Vagina (tissue), 2 donors: ENCODE measurements at regions of chr12 and their contacts with region 1.

Region 1: GRCh38 chr12:12376646-12377448 is 20.0 kb downstream of the BORCS5 start:
- DNase-seq: no peak
- H3K4me3 ChIP-seq: no peak overlapping the region
- H3K27ac ChIP-seq: no peak overlapping the region
- H3K4me1 ChIP-seq: peaks cover 6% of the 10 kb centered on the region
- H3K27me3 ChIP-seq: no peaks in the 10 kb centered on the region
- CTCF ChIP-seq: peak; percentile 52 to 80 (median 69)
- POLR2A ChIP-seq: no peak

Region 2: DNA sequence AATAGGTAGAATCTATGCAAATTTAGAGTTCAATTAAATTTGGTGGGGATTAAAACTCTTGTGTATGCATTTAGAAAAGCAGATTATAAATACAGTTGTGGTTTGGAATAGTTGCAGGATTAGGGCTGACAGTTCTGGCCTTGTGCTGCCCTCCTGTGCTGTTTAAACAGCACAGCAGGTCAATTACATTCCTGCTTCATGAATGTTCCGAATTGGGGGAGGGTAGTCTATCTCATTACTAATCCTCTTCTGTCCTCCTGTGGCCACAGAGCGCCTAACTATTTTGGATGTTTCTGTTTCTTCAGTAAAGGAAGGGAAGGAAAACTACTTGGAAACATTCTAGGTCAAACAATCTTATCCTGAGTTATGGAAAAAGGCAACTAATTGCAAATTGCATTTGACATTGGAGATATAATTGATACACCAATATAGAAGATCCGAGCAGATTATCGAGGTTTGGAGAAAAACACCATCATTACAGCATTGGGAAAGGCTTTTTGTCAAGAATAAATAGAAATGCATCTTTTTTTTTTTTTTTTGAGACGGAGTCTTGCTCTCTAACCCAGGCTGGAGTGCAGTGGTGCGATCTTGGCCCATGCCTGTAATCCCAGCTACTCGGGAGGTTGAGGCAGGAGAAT is 327.9 kb after region 1 on chr12:
- intact Hi-C with region 1: loop called (anchors 10 kb)
- DNase-seq: no peak
- H3K4me3 ChIP-seq: no peak overlapping the region
- H3K27ac ChIP-seq: peak overlapping the region; percentile 42
- H3K4me1 ChIP-seq: peaks cover 7% of the 10 kb centered on the region
- H3K27me3 ChIP-seq: no peaks in the 10 kb centered on the region
- CTCF ChIP-seq: peak; percentile 80 to 99 (median 89)
- POLR2A ChIP-seq: no peak